SK-N-SH (cell line): ENCODE measurements at regions of chr9 and their contacts with region 1.

Region 1: DNA sequence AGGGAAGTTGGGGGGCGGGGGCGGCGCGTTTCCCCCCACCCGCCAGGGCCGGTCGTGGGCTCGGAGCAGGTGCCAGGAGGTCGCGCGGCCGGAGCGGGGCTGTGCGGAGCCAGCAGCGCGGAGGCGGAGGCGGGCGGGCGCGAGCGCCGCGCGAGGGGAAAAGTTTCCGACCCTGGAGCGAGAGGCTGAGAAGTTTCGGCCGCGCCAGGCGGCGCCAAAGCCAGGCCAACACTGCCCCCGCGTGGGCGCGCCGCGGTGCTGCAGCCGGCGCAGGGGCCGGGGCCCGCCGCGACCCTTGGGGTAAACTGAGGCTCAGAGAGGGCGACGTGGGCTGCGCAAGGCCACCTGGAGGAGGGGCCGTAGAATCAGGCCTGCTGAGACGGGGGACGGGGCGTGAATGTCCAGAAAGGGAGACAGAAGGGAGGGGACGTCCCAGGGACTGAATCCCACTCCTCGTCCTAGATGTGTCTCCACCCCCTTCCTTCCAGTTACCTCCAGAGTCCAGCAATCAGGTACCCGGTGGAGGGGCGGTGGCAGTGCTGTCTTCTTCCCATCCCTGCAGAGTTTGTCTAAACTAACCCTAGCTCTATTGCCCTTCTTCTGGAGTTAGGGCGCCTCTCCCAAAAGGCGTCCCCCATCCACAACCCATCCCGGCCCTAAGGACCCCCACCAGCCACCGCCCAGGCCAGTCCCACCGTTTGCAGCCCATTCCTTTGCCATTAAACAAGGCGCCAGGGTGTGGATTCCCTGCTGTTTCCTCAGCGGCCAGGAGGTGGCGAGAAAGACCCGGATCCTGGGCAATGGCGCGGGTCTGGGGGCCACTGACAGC is 10.2 kb downstream of the C9orf50 start:
- DNase-seq: peak; percentile 91
- H3K4me3 ChIP-seq: peak overlapping the region; percentile 60 to 77
- H3K27ac ChIP-seq: peak overlapping the region; percentile 58 to 60; a peak in 3 of 4 replicates
- H3K4me1 ChIP-seq: peaks cover 4 to 25% of the 10 kb centered on the region in 2 experiments; a peak in 2 of 4 replicates
- H3K27me3 ChIP-seq: no peaks in the 10 kb centered on the region
- CTCF ChIP-seq: peak; percentile 87
- EP300 ChIP-seq: no peak
- RAD21 ChIP-seq: peak; percentile 90

Region 2: GRCh38 chr9:128771745-128772519 is 838.8 kb before region 1 on chr9 and contains the start of gene ZER1:
- CTCF ChIA-PET with region 1: no interaction called
- POLR2A ChIA-PET with region 1: no interaction called
- DNase-seq: peak; percentile 99
- H3K4me3 ChIP-seq: peak within 1 kb of the TSS; percentile 71 to 90
- H3K27ac ChIP-seq: peak within 1 kb of the TSS; percentile 74 to 81
- H3K4me1 ChIP-seq: peaks cover 0 to 7% of the 10 kb centered on the region in 2 experiments; a peak in 1 of 4 replicates
- H3K27me3 ChIP-seq: no peaks in the 10 kb centered on the region
- CTCF ChIP-seq: no peak
- EP300 ChIP-seq: peak; percentile 51 to 59; a peak in 3 of 4 replicates
- RAD21 ChIP-seq: no peak
- polyA plus RNA-seq, gene ZER1: 25.4 and 30.9 TPM in 2 replicates

Region 3: DNA sequence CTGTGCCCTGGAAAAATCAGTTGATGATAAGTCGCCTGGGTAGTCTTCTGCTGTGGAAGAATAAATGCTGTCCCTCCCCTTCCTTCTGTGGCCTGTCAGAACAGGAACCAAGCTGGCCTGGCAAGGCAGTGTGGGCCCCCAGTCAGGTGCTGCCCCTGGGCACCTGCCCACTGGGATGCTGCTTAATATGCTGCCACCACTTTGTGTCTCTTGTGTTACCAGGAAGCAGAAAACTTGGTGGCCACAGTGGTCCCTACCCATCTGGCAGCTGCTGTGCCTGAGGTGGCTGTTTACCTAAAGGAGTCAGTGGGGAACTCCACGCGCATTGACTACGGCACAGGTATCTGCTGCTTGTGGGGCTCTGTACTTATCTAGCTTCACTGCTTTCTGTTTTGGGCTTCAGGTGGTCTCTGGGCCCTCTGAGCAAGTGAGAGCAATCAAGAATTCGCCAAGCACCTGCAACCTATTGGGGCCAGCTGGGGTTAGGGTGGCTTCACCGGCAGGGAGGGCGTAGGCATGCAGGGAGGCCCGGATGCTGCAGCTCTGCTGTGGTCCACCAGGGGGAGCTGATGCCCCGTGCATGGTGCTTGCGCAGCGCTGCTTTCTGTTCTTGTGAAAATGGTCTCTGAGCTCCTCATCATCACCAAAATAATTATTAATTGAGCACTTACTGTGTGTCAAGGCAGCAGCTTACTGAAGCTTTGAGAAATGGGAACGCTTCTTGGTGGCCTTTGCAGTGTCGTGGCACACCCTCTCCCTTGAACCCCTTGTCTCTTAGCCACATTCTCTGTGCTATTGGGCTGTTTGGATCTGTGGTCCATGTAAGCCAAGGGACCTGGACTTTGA is 479.2 kb before region 1 on chr9:
- CTCF ChIA-PET with region 1: interaction called, 27 read pairs
- POLR2A ChIA-PET with region 1: interaction called, 3 read pairs
- DNase-seq: peak; percentile 91
- H3K4me3 ChIP-seq: no peak overlapping the region
- H3K27ac ChIP-seq: no peak overlapping the region
- H3K4me1 ChIP-seq: peaks cover 0 to 11% of the 10 kb centered on the region in 2 experiments; a peak in 1 of 4 replicates
- H3K27me3 ChIP-seq: no peaks in the 10 kb centered on the region
- CTCF ChIP-seq: peak; percentile 97
- EP300 ChIP-seq: no peak
- RAD21 ChIP-seq: peak; percentile 85

Region 4: GRCh38 chr9:129460323-129461261 is 150.1 kb before region 1 on chr9:
- CTCF ChIA-PET with region 1: interaction called, 3 read pairs
- POLR2A ChIA-PET with region 1: interaction called, 10 read pairs
- DNase-seq: peak; percentile 96
- H3K4me3 ChIP-seq: peak overlapping the region; percentile 33 to 55
- H3K27ac ChIP-seq: peak overlapping the region; percentile 99 to 100
- H3K4me1 ChIP-seq: peaks cover 39 to 44% of the 10 kb centered on the region in 2 experiments; a peak in 3 of 4 replicates
- H3K27me3 ChIP-seq: no peaks in the 10 kb centered on the region
- CTCF ChIP-seq: no peak
- EP300 ChIP-seq: peak; percentile 44 to 46; a peak in 2 of 4 replicates
- RAD21 ChIP-seq: peak; percentile 39

Region 5: DNA sequence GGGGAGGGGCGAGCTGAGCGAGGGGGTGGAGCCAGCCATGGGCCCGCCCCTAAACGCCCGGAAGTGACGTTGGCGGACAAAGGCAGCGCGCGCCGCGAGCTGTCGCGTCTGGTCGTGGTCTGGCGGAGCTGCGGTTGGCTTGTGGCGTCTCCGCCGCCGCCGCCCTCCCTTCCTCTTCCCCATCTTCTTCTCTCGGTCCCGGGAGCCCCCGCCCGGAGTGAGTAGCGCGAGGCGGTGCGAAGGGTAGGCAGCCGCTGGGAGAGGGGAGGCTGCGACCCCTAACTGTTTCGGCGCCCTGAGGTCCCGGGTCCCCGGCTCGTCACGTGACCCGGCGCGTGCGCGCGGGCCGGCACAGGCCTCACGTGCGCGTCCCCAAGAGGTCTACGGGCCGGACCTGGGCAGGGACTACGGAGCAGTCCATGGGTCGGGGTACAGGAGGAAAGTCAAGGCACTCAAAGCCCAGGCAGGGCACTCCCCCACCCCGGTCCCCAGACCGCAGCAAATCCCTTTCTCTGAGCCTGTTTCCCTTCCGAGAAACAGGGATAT is 15.5 kb after region 1 on chr9 and contains the start of gene NTMT1:
- CTCF ChIA-PET with region 1: interaction called, 88 read pairs
- POLR2A ChIA-PET with region 1: interaction called, 3 read pairs
- DNase-seq: peak; percentile 95
- H3K4me3 ChIP-seq: peak within 1 kb of the TSS; percentile 87 to 92
- H3K27ac ChIP-seq: peak within 1 kb of the TSS; percentile 78 to 83
- H3K4me1 ChIP-seq: peaks cover 16 to 29% of the 10 kb centered on the region in 2 experiments; a peak in 2 of 4 replicates
- H3K27me3 ChIP-seq: no peaks in the 10 kb centered on the region
- CTCF ChIP-seq: no peak
- EP300 ChIP-seq: no peak
- RAD21 ChIP-seq: no peak
- polyA plus RNA-seq, gene NTMT1: 75.0 and 78.3 TPM in 2 replicates

Region 6: DNA sequence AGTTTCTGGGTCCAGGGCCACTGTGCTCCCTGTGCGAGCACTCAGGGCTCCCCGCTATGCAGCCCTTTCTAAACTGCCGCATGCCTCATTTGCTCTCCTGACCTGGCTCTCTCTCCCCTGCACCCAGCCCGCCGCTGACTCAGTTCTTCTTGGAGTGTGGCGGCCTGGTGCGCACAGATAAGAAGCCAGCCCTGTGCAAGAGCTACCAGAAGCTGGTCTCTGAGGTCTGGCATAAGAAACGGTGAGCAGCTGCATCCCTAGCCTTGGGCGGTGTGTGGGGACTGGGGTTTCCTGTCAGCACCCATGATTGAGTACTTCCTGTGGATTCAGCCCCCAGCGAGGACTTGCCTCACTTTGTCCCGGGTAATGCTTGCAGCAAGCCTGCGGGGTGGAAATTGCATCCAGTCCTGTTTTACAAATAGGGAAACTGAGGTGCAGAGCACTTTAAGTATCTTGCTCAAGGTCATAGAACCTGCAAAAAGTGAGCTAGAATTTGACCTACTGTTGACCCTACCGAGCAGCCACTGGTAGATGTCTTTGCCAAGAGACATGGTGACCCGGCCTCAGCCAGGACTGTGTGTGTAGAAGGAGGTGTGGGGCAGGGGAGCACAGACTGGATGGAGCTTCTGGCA is 252.5 kb after region 1 on chr9:
- CTCF ChIA-PET with region 1: no interaction called
- POLR2A ChIA-PET with region 1: no interaction called
- DNase-seq: peak; percentile 85
- H3K4me3 ChIP-seq: no peak overlapping the region
- H3K27ac ChIP-seq: peak overlapping the region in 1 of 2 experiments; percentile 89; a peak in 2 of 4 replicates
- H3K4me1 ChIP-seq: peaks cover 0 to 14% of the 10 kb centered on the region in 2 experiments; a peak in 1 of 4 replicates
- H3K27me3 ChIP-seq: no peaks in the 10 kb centered on the region
- CTCF ChIP-seq: no peak
- EP300 ChIP-seq: peak in 1 of 2 experiments; percentile 81; a peak in 2 of 4 replicates
- RAD21 ChIP-seq: peak; percentile 27; the same call in 1 of the 2 replicates